Activated T-helper 1 cell treated with anti-CD3 and anti-CD28 coated beads, Interleukin-12 subunit alpha, Interleukin-12 subunit beta, Interleukin-2, Interleukin-4 antibody, amounts not matched to agents 30 ng/mL and 10 ng/mL and 1 ng/mL, durations not matched to agents 14 hours and 24 hours and 36 hours (primary cell): ENCODE measurements at regions of chr17 and their contacts with region 1.

Region 1: GRCh38 chr17:1673041-1673785 is 11.5 kb downstream of the PRPF8 start:
- DNase-seq: no peak
- H3K4me3 Mint-ChIP-seq: no peak overlapping the region
- H3K27ac Mint-ChIP-seq: no peak overlapping the region
- H3K4me1 Mint-ChIP-seq: peaks cover 14% of the 10 kb centered on the region
- H3K27me3 Mint-ChIP-seq: no peaks in the 10 kb centered on the region

Region 2: GRCh38 chr17:1617620-1618174 is 55.5 kb before region 1 on chr17:
- intact Hi-C with region 1: no loop called
- DNase-seq: no peak
- H3K4me3 Mint-ChIP-seq: no peak overlapping the region
- H3K27ac Mint-ChIP-seq: no peak overlapping the region
- H3K4me1 Mint-ChIP-seq: no peaks in the 10 kb centered on the region
- H3K27me3 Mint-ChIP-seq: no peaks in the 10 kb centered on the region

Region 3: GRCh38 chr17:1648963-1649843 is 24.0 kb before region 1 on chr17:
- intact Hi-C with region 1: no loop called
- DNase-seq: peak; percentile 92
- H3K4me3 Mint-ChIP-seq: peak overlapping the region; percentile 59
- H3K27ac Mint-ChIP-seq: no peak overlapping the region
- H3K4me1 Mint-ChIP-seq: peaks cover 22% of the 10 kb centered on the region
- H3K27me3 Mint-ChIP-seq: peaks cover 2% of the 10 kb centered on the region

Region 4: DNA sequence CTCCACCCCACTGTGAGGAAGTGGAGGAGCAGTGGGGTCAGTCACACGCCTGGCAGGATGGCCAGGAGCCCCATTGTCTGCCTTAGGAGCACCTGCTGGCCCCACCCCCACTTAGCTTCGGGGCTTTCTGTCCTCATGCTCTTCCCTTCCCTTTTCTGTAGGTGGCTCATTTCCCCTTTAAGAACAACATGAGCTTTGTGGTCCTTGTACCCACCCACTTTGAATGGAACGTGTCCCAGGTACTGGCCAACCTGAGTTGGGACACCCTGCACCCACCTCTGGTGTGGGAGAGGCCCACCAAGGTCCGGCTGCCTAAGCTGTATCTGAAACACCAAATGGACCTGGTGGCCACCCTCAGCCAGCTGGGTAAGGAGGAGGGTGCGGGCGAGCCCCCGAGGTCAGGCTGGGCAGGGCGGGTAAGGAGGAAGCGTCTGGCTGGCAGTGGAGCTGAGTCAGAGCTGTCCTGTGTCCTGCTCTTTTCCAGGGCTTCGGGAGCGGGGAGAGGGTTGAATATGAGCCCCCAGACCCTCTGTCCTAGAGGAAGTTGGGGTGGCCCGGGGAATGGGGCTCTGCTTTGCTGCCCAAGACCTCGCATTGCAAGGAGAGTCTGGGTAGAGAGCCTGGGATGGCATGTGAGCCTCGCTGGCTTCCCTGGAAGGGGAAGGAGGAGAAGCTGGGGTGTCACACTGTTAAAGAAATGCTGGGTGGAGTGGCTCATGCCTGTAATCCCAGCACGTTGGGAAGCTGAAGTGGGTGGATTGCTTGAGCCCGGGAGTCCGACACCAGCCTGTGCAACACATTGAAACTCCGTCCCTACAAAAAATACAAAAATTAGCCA is 79.4 kb after region 1 on chr17:
- intact Hi-C with region 1: no loop called
- DNase-seq: no peak
- H3K4me3 Mint-ChIP-seq: no peak overlapping the region
- H3K27ac Mint-ChIP-seq: no peak overlapping the region
- H3K4me1 Mint-ChIP-seq: no peaks in the 10 kb centered on the region
- H3K27me3 Mint-ChIP-seq: peaks cover 2% of the 10 kb centered on the region

Region 5: DNA sequence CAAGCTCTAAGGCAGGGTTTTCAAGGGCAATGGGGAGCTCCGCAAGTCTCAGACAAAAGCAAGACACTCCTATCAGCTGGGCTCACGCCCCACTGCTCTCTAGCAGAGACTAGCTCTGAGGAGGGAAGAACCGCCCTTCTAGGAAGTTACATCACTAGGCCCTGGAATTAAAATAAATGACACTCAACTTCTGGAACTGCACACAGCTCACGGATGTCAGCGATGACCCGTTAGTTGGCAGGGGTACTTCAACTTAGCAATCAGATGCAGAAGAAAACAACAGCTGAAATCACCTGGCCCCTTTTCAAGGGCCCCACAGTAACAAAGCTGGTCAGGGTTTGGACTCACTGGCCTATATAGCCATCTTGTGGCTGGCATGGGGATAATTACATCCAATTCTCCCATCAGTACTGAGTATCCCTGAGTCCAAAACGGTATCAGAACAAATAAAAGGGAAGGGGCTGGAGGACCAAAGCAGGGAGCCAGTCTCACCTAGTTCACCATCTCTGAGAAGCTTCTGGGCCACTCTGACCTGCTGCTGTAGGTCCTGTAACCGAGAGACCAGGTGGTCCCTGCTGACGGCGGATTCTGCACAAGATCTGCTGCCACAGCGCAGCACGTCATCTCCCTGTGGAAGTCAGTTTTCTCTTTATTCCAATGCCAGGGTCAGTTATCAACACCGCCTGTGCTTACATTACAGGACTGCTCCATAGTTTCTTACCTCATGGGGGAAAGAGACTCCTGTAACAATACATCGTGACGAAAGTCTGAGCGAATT is 110.8 kb after region 1 on chr17:
- intact Hi-C with region 1: loop called (anchors 1 kb)
- DNase-seq: no peak
- H3K4me3 Mint-ChIP-seq: no peak overlapping the region
- H3K27ac Mint-ChIP-seq: peak overlapping the region; percentile 44
- H3K4me1 Mint-ChIP-seq: peaks cover 10% of the 10 kb centered on the region
- H3K27me3 Mint-ChIP-seq: no peaks in the 10 kb centered on the region

Region 6: GRCh38 chr17:2647957-2648356 is 974.7 kb after region 1 on chr17:
- intact Hi-C with region 1: no loop called
- DNase-seq: no peak
- H3K4me3 Mint-ChIP-seq: no peak overlapping the region
- H3K27ac Mint-ChIP-seq: no peak overlapping the region
- H3K4me1 Mint-ChIP-seq: no peaks in the 10 kb centered on the region
- H3K27me3 Mint-ChIP-seq: no peaks in the 10 kb centered on the region